Tibial artery (tissue), 4 donors: ENCODE measurements at regions of chr13 and their contacts with region 1.

Region 1: DNA sequence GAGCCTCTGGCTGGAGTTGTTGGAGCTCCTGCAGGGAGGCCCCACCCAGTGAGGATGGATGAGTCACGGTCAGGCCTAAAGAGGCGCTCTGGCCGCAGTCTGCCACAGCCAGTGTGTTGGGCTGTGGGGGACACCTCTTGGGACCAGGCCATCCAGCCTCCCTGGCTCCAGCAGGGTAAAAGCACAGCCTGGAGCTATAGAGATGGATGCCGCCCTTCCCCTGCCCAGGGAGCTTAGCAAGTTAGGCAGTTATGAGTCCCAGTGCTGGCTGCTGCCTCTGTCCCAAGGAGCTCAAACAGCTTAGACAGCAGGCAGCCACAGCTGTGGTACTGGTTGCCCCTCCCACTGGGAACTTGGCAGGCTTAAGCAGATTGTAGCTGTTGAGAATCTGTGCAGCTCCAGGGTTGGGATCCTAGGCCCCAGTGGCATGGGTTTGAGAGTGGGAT is 100.9 kb downstream of the NDFIP2 start:
- DNase-seq: no peak
- H3K4me3 ChIP-seq: no peak overlapping the region
- H3K27ac ChIP-seq: no peak overlapping the region
- H3K4me1 ChIP-seq: no peaks in the 10 kb centered on the region
- H3K27me3 ChIP-seq: no peaks in the 10 kb centered on the region
- CTCF ChIP-seq: no peak

Region 2: DNA sequence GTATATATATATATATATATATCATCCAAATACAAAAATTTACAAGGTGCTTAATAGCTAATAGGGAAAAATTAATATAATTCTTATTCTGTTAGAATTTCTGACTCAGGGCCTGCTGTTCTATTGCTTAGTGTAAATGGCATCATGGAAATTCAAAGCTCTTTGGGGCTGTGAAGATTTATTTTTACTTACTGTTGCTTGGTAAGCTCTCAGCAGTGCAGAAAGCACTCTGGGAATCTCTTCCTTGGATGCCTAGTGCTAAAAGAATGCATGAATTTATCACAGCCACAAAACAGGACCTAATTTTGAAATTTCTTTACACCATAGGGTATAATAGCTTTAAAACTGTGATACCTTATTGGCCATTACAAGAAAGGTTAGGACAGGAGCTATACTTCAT is 1953.7 kb before region 1 on chr13:
- intact Hi-C with region 1: loop called (anchors 5 kb)
- DNase-seq: no peak
- H3K4me3 ChIP-seq: no peak overlapping the region
- H3K27ac ChIP-seq: no peak overlapping the region
- H3K4me1 ChIP-seq: no peaks in the 10 kb centered on the region
- H3K27me3 ChIP-seq: no peaks in the 10 kb centered on the region
- CTCF ChIP-seq: no peak